ENCODE measurements at regions of chr1 and their contacts with region 1.

Region 1: DNA sequence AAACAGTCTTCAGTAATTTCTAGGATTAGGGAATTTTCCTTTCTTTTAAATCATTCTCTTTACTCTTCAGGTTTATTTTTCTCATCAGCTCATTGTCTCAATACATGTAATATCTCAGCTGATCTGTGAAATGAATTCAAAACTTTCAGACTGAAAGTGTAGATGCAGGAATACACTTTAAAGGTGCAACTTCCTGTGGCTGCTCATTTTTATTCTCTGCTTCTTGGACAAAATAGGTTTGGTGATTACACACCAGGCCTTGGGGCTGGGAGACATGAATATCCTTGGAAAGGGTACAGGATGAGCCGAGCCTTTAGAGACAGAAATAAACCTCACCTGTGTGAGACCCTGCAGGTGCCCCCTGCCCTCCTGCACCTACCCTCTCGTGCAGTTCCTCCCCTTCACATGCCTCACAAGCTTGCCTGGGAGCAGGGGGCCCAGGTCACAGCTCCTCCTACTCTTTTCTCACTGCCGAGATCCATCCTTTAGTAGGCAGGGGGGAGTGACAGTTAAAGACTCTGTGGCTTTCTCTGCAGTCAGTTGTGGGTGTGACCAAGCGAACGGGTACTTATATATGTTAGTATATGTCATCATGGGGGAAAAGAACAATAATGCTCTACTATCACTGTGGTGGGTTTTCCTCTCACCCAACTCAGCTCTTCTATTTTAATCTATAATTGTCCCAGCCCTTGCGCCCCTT is 23.6 kb downstream of the XCL2 start:
- DNase-seq: no peak
- ATAC-seq: peak; percentile 95
- H3K4me3 ChIP-seq: no peak overlapping the region
- H3K27ac ChIP-seq: no peak overlapping the region
- H3K4me1 ChIP-seq: peaks cover 10% of the 10 kb centered on the region
- H3K27me3 ChIP-seq: no peaks in the 10 kb centered on the region; a peak in 1 of 4 replicates
- CTCF ChIP-seq: no peak
- EP300 ChIP-seq: peak; percentile 46 to 74; a peak in 2 of 4 replicates
- POLR2A ChIP-seq: no peak
- RAD21 ChIP-seq: no peak

Region 2: GRCh38 chr1:168504064-168504837 is 16.0 kb before region 1 on chr1:
- CTCF ChIA-PET with region 1: interaction called, 16 read pairs
- POLR2A ChIA-PET with region 1: interaction called, 14 read pairs
- RAD21 ChIA-PET with region 1: interaction called, 70 read pairs
- SMC1A ChIA-PET with region 1: interaction called, 36 read pairs
- in situ Hi-C with region 1: no loop called
- intact Hi-C with region 1: no loop called
- DNase-seq: peak; percentile 60
- ATAC-seq: peak; percentile 87
- H3K4me3 ChIP-seq: no peak overlapping the region
- H3K27ac ChIP-seq: no peak overlapping the region
- H3K4me1 ChIP-seq: peaks cover 1% of the 10 kb centered on the region
- H3K27me3 ChIP-seq: no peaks in the 10 kb centered on the region
- CTCF ChIP-seq: no peak
- EP300 ChIP-seq: peak in 1 of 2 experiments; percentile 47; a peak in 1 of 4 replicates
- POLR2A ChIP-seq: no peak
- RAD21 ChIP-seq: no peak

Region 3: DNA sequence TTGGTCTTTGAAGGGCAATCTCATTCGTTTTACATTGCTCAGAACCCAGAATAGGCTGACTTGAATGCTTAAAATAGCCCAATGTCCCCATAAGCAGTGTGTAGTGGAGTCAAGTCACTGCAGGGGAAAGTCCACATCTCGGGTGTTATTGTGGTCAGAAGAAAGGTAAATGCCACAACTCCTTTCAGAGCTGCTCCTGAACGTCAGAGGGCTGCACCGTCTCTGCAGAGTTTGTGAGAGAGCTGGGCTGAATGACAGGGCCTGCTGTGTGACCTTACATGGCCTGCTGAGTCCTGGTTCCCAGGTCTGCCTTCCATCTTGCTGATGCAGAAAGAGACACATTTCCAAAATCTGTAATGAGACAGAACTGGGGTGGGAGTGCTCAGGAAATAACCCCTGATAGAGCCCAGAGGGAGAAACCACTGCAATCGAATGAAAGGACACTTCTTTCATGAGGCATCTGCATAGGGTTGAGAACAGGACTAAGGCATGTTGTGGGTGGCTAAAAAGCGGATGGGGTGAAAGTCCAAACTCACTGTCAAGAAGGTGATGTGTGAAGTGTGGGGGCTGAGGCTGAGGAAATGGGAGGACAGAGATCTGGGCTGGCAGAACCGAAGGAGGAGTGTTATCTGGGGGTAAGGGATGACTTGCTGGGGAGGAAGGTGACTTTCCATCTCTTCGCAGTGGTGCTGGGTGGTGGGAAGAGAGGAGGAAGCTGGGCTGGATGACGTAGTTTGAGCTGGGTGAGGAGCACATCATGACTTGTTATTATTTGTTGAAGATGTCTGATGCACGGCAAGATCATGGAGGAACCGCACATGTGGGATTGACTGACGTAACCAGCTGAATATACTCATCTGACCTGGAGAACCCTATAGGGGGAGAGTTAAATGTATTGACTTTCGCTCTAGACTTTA is 10.1 kb before region 1 on chr1:
- CTCF ChIA-PET with region 1: interaction called, 16 read pairs
- POLR2A ChIA-PET with region 1: interaction called, 14 read pairs
- RAD21 ChIA-PET with region 1: interaction called, 70 read pairs
- SMC1A ChIA-PET with region 1: interaction called, 36 read pairs
- in situ Hi-C with region 1: no loop called
- intact Hi-C with region 1: no loop called
- DNase-seq: peak; percentile 88
- ATAC-seq: peak; percentile 90
- H3K4me3 ChIP-seq: no peak overlapping the region
- H3K27ac ChIP-seq: peak overlapping the region; percentile 61
- H3K4me1 ChIP-seq: peaks cover 16% of the 10 kb centered on the region
- H3K27me3 ChIP-seq: no peaks in the 10 kb centered on the region
- CTCF ChIP-seq: no peak
- EP300 ChIP-seq: peak; percentile 12 to 64; a peak in 3 of 4 replicates
- POLR2A ChIP-seq: no peak
- RAD21 ChIP-seq: no peak; the same call in 1 of the 2 replicates

Region 4: DNA sequence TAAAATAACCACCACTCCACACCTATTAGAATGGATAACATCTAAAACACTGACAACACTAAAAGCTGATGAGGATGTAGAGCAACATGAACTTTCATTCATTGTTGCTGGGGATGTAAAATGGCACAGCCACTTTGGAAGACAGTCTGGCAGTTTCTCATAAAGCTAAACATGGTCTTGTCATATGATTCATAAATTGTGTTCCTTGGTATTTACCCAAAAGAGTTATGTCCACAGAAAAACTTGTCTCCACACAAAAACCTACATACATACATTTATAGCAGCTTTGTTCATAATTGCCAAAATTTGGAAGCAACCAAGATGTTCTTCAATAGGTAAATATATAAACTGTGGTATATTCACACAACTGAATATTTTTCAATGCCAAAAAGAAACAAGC is 40.2 kb after region 1 on chr1:
- CTCF ChIA-PET with region 1: interaction called, 22 read pairs
- POLR2A ChIA-PET with region 1: interaction called, 41 read pairs
- RAD21 ChIA-PET with region 1: interaction called, 218 read pairs
- SMC1A ChIA-PET with region 1: interaction called, 257 read pairs
- in situ Hi-C with region 1: no loop called
- intact Hi-C with region 1: no loop called
- DNase-seq: no peak
- ATAC-seq: no peak
- H3K4me3 ChIP-seq: no peak overlapping the region
- H3K27ac ChIP-seq: no peak overlapping the region
- H3K4me1 ChIP-seq: no peaks in the 10 kb centered on the region
- H3K27me3 ChIP-seq: no peaks in the 10 kb centered on the region
- CTCF ChIP-seq: no peak
- EP300 ChIP-seq: no peak
- POLR2A ChIP-seq: no peak
- RAD21 ChIP-seq: no peak